ENCODE measurements at regions of chr1 and their contacts with region 1.

Region 1: GRCh38 chr1:227489572-227489971 is 73.8 kb upstream of the ZNF678 start:
- DNase-seq: no peak
- ATAC-seq: peak; percentile 40 to 73 (median 65)
- H3K4me3 ChIP-seq: no peak overlapping the region
- H3K27ac ChIP-seq: no peak overlapping the region
- H3K4me1 ChIP-seq: peaks cover 14% of the 10 kb centered on the region
- H3K27me3 ChIP-seq: no peaks in the 10 kb centered on the region
- CTCF ChIP-seq: no peak

Region 2: DNA sequence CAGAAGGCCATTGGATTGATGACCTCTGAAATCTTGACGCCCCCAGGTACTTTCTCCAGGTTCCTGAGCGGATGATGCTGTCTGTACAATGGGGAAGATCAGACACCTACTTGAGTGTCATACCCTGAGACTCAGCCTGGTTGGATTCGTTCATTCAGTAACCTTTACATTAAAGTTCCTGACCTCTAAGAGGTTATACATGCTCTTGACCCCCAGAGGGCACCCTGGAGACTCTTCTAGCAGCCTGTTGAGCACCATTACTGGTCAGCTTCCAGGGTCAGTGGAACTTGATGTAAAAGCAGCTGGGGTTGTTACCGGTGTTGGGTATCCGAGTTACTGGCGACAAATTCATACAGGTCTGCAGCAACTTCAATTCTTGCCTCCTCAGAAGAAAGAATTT is 40.5 kb before region 1 on chr1:
- intact Hi-C with region 1: no loop called
- DNase-seq: no peak
- ATAC-seq: peak in 2 of 4 donors; percentile 35 to 43
- H3K4me3 ChIP-seq: no peak overlapping the region
- H3K27ac ChIP-seq: no peak overlapping the region
- H3K4me1 ChIP-seq: no peaks in the 10 kb centered on the region
- H3K27me3 ChIP-seq: peaks cover 0 to 22% (median 0%) of the 10 kb centered on the region in 3 donors
- CTCF ChIP-seq: peak; percentile 14

Region 3: DNA sequence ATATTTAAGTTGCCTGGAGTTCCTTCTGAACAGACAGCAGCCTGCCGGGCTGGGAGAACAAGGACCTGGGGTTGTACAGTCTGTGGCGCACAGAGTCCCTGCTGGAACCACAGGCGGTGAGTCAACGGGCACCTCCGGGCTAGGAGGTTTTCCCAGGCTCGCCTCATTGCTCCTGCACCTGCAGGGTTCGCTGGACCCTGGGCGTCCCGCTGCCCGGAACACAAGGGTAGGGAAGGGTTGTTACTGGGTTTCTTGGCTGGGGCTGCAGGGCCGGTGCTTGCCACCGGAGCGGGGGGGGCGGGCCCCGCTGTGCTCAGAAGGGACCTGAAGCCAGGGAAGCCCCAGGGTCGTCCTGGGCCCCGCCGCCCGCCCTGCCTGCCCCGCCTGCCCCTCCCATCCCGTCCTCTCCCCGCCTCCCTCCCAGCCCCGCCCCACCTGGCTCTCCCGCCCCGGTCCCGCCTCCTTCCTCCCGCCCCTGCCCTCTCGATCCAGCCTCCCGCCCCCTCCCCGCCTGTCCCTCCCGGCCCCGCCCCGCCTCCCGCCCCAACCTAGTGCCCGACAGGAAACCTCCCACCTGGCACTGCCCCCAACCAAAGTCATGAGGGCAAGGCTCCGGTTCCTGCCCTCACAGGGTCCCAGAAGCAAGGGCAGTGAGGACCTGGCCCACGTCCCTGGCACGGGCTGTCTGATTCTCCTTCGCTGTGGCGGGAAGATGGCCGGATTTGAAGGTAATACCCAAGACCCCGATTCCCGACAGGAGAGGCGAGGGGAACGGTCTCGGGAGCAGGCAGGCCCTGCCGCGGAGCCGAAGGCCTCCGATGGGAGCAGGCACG is 238.7 kb after region 1 on chr1:
- intact Hi-C with region 1: loop called in 1 of 2 experiments (anchors 10 kb)
- DNase-seq: peak; percentile 79 to 84
- ATAC-seq: peak; percentile 70 to 79 (median 76)
- H3K4me3 ChIP-seq: peak overlapping the region; percentile 67
- H3K27ac ChIP-seq: peak overlapping the region; percentile 67
- H3K4me1 ChIP-seq: peaks cover 12% of the 10 kb centered on the region
- H3K27me3 ChIP-seq: no peaks in the 10 kb centered on the region
- CTCF ChIP-seq: no peak

Measured in psoas muscle (tissue), 8 donors.